GM12878 (cell line): ENCODE measurements at regions of chr9 and their contacts with region 1.

Region 1: GRCh38 chr9:99130069-99130468 is 25.2 kb downstream of the TGFBR1 start:
- DNase-seq: peak; percentile 72
- ATAC-seq: peak; percentile 87
- H3K4me3 ChIP-seq: no peak overlapping the region
- H3K27ac ChIP-seq: peak overlapping the region; percentile 22
- H3K4me1 ChIP-seq: peaks cover 38% of the 10 kb centered on the region
- H3K27me3 ChIP-seq: no peaks in the 10 kb centered on the region
- CTCF ChIP-seq: no peak
- EP300 ChIP-seq: peak; percentile 81 to 95
- POLR2A ChIP-seq: no peak
- RAD21 ChIP-seq: 0 out of 2 replicates have a peak, but pooled peaks have one; percentile 2

Region 2: GRCh38 chr9:98848450-98849149 is 281.5 kb before region 1 on chr9:
- CTCF ChIA-PET with region 1: interaction called, 8 read pairs
- POLR2A ChIA-PET with region 1: no interaction called
- RAD21 ChIA-PET with region 1: no interaction called
- SMC1A ChIA-PET with region 1: no interaction called
- in situ Hi-C with region 1: loop called (anchors 5 kb)
- intact Hi-C with region 1: no loop called
- DNase-seq: peak; percentile 23
- ATAC-seq: peak; percentile 100
- H3K4me3 ChIP-seq: no peak overlapping the region
- H3K27ac ChIP-seq: no peak overlapping the region
- H3K4me1 ChIP-seq: no peaks in the 10 kb centered on the region
- H3K27me3 ChIP-seq: no peaks in the 10 kb centered on the region; a peak in 1 of 4 replicates
- CTCF ChIP-seq: peak; percentile 90 to 96 (median 94)
- EP300 ChIP-seq: no peak
- POLR2A ChIP-seq: no peak
- RAD21 ChIP-seq: peak; percentile 86

Region 3: GRCh38 chr9:98998441-98999151 is 131.5 kb before region 1 on chr9:
- CTCF ChIA-PET with region 1: interaction called, 304 read pairs
- POLR2A ChIA-PET with region 1: interaction called, 3 read pairs
- RAD21 ChIA-PET with region 1: interaction called, 3 read pairs
- SMC1A ChIA-PET with region 1: interaction called, 110 read pairs
- in situ Hi-C with region 1: loop called (anchors 5 kb)
- intact Hi-C with region 1: no loop called
- DNase-seq: no peak
- ATAC-seq: peak; percentile 92
- H3K4me3 ChIP-seq: no peak overlapping the region
- H3K27ac ChIP-seq: no peak overlapping the region
- H3K4me1 ChIP-seq: peaks cover 2% of the 10 kb centered on the region
- H3K27me3 ChIP-seq: 0 out of 4 replicates have a peak, but pooled peaks cover 0 to 2% of the 10 kb centered on the region in 2 experiments
- CTCF ChIP-seq: peak; percentile 76 to 96 (median 81)
- EP300 ChIP-seq: no peak
- POLR2A ChIP-seq: no peak
- RAD21 ChIP-seq: peak; percentile 62

Region 4: DNA sequence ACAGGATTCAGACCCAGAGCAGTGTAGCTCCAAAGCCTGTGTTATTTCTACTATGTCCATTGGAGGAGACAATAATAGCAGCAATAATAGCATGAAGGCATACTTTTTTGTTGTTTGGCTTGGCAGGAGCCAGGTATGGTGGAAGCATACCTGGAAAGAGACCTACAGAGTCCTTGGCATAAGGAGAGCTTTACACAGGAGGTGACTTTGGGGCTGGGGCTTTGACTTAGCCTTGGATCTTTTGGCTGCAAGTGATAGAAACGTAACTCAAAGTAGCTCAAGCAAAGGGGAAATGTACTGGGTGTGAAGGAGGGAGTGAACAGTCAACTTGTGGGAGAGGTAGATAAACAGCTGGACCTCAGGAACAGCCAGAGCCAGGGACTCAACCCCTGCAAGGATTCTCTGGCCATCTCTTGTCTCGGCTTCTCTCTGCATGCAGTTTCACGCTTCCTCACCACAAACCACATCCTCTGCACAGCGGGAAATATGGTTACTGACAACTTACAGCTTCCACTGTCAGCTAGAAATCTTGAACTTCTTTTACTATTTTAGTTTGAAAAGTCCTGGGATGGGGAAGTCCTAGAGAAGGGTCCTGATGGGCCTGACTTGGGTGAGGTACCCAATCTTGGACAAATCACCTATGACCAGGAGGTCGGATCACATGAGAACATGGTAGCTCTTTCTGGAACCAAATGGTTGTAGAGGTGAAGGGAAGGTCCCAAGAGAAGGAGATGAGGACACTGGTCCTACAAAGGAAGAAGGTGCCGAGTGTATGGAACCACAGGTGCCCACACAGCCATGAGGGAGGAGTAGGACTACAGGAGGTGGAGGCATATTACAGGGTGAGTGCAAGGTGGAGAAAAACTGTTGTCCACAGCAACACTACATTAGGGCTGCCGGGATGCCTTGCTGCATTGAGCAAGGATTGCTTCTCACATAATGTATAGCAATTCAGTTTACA is 72.1 kb before region 1 on chr9:
- CTCF ChIA-PET with region 1: interaction called, 4 read pairs
- POLR2A ChIA-PET with region 1: no interaction called
- RAD21 ChIA-PET with region 1: interaction called, 12 read pairs
- SMC1A ChIA-PET with region 1: interaction called, 24 read pairs
- in situ Hi-C with region 1: no loop called
- intact Hi-C with region 1: loop called (anchors 5 kb)
- DNase-seq: peak; percentile 64
- ATAC-seq: peak; percentile 88
- H3K4me3 ChIP-seq: peak overlapping the region; percentile 25; the same call in 1 of the 2 replicates
- H3K27ac ChIP-seq: peak overlapping the region; percentile 15; the same call in 1 of the 2 replicates
- H3K4me1 ChIP-seq: peaks cover 27% of the 10 kb centered on the region
- H3K27me3 ChIP-seq: no peaks in the 10 kb centered on the region
- CTCF ChIP-seq: no peak
- EP300 ChIP-seq: no peak
- POLR2A ChIP-seq: no peak
- RAD21 ChIP-seq: no peak

Region 5: GRCh38 chr9:99104459-99105151 is 25.5 kb before region 1 on chr9 and contains the start of gene TGFBR1:
- CTCF ChIA-PET with region 1: interaction called, 8 read pairs
- POLR2A ChIA-PET with region 1: interaction called, 4 read pairs
- RAD21 ChIA-PET with region 1: interaction called, 83 read pairs
- SMC1A ChIA-PET with region 1: interaction called, 113 read pairs
- in situ Hi-C with region 1: no loop called
- intact Hi-C with region 1: loop called (anchors 2 kb)
- DNase-seq: peak; percentile 53
- ATAC-seq: peak; percentile 89
- H3K4me3 ChIP-seq: peak within 1 kb of the TSS; percentile 87
- H3K27ac ChIP-seq: peak within 1 kb of the TSS; percentile 67
- H3K4me1 ChIP-seq: peaks cover 8% of the 10 kb centered on the region; the same call in 1 of the 2 replicates
- H3K27me3 ChIP-seq: no peaks in the 10 kb centered on the region
- CTCF ChIP-seq: peak in 1 of 3 experiments; percentile 21; a peak in 1 of 6 replicates
- EP300 ChIP-seq: no peak
- POLR2A ChIP-seq: no peak
- RAD21 ChIP-seq: no peak
- polyA plus RNA-seq, gene TGFBR1: 5.7 to 19.6 TPM

Region 6: GRCh38 chr9:99112750-99113413 is 17.2 kb before region 1 on chr9:
- CTCF ChIA-PET with region 1: interaction called, 7 read pairs
- POLR2A ChIA-PET with region 1: interaction called, 9 read pairs
- RAD21 ChIA-PET with region 1: interaction called, 83 read pairs
- SMC1A ChIA-PET with region 1: interaction called, 129 read pairs
- in situ Hi-C with region 1: no loop called
- intact Hi-C with region 1: no loop called
- DNase-seq: no peak
- ATAC-seq: peak; percentile 32
- H3K4me3 ChIP-seq: peak overlapping the region; percentile 10; the same call in 1 of the 2 replicates
- H3K27ac ChIP-seq: no peak overlapping the region
- H3K4me1 ChIP-seq: peaks cover 3% of the 10 kb centered on the region; the same call in 1 of the 2 replicates
- H3K27me3 ChIP-seq: no peaks in the 10 kb centered on the region
- CTCF ChIP-seq: no peak
- EP300 ChIP-seq: no peak
- POLR2A ChIP-seq: no peak
- RAD21 ChIP-seq: no peak

Region 7: DNA sequence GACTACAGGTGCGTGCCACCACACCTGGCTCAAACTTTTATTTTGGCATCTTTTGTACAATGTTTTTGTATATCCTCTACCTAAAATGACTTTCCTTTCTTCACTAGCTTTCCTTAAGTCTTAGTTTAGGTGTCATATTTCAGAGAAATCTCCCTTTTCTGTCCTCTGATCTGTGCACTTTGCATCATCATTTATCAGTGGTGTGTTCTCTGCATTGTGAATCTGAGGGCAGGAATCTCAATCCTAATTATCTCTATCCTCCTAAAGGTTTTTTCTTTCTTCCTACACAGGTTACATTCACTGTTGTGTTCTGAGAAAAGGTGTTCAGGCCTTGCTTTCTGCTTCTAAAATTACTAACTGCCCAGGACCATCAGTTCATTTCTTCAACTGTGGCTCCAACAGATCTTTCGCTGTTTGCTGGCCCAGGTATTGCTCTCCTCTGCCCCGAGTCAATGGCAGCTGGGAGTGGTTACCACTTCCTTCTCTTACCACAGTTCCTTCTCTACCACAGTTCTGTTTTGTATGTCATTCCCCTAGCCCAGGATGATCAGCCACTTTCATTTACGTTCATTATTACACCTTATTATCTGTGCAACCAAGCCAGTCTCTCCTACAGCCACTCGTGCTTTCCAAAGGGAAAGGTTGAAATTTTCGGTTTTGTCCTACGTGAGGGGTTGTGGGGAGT is 11.1 kb before region 1 on chr9:
- CTCF ChIA-PET with region 1: interaction called, 9 read pairs
- POLR2A ChIA-PET with region 1: interaction called, 9 read pairs
- RAD21 ChIA-PET with region 1: interaction called, 36 read pairs
- SMC1A ChIA-PET with region 1: interaction called, 129 read pairs
- in situ Hi-C with region 1: no loop called
- intact Hi-C with region 1: no loop called
- DNase-seq: peak; percentile 76
- ATAC-seq: peak; percentile 95
- H3K4me3 ChIP-seq: peak overlapping the region; percentile 15; the same call in 1 of the 2 replicates
- H3K27ac ChIP-seq: peak overlapping the region; percentile 68
- H3K4me1 ChIP-seq: peaks cover 19% of the 10 kb centered on the region
- H3K27me3 ChIP-seq: no peaks in the 10 kb centered on the region
- CTCF ChIP-seq: no peak
- EP300 ChIP-seq: peak; percentile 75 to 93; a peak in 3 of 4 replicates
- POLR2A ChIP-seq: no peak
- RAD21 ChIP-seq: no peak